ENCODE measurements at regions of chr3 and their contacts with region 1.

Region 1: DNA sequence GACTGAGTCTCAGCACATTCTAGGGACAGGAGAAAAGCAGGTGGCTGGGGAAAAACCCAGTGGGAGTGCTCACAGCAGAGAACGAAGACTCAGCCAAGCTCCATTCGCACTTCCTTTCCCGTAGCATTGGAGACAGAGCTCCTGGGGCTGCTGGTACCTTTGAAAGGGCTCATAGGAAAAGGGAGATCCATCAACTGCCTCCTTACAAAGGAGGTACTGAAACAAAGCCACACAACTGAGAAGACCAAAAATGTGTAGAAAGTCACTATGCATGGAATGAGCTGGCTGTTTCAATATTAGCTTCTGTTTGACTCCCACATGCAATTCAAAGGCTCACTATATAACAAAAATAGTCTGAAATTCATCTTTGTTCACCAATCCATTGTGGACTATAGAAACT is 16.9 kb downstream of the STIMATE start:
- DNase-seq: peak; percentile 65
- CTCF ChIP-seq: no peak

Region 2: GRCh38 chr3:52892625-52893311 is 12.3 kb after region 1 on chr3:
- CTCF ChIA-PET with region 1: interaction called, 39 read pairs
- POLR2A ChIA-PET with region 1: interaction called, 5 read pairs
- DNase-seq: peak; percentile 62
- CTCF ChIP-seq: no peak

Measured in GM10248 (cell line).